ENCODE measurements at regions of chr7 and their contacts with region 1.

Region 1: GRCh38 chr7:116797612-116798011 is 64.8 kb upstream of the CAPZA2 start:
- DNase-seq: no peak
- ATAC-seq: peak in 1 of 2 donors; percentile 52

Region 2: DNA sequence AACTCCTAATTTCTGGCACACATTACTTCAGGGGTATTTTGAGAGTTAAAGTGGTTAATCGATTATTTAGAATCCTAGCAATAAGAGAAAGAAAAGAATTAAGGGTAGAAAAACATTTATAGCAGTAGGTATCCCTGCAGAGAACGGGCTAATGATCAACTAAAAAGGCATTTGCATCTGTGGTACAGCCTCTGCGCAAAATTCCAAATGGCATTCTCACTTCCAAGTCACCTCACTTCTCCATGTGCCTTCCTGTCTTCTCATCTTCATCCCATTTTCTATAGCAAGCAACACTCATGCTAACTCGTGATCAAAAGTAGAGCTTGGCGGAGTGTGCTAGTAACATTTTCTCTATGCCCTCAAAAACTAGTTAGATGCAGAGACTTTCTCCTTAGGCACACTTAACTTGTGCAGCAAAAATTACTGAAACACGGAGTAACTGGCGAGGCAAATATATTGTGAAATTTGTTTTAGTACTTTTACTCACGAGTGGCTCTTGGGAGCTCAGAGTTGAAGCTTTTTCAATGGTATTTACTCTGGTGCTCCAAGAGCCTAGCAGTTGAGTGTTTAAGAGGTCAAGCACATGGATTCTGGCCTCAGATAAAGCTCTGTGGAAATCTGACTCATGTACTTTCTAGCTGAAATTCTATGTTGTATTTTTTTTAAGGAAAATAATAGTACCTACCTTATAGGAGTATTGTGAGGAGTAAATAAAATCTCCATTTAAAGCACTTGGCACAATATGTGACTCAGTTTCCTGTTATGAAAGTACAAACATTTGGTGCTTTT is 60.5 kb before region 1 on chr7:
- intact Hi-C with region 1: loop called in 1 of 2 experiments (anchors 10 kb)
- DNase-seq: no peak
- ATAC-seq: no peak

Measured in left cardiac atrium (tissue), 4 donors.